ENCODE measurements at regions of chr3 and their contacts with region 1.

Region 1: DNA sequence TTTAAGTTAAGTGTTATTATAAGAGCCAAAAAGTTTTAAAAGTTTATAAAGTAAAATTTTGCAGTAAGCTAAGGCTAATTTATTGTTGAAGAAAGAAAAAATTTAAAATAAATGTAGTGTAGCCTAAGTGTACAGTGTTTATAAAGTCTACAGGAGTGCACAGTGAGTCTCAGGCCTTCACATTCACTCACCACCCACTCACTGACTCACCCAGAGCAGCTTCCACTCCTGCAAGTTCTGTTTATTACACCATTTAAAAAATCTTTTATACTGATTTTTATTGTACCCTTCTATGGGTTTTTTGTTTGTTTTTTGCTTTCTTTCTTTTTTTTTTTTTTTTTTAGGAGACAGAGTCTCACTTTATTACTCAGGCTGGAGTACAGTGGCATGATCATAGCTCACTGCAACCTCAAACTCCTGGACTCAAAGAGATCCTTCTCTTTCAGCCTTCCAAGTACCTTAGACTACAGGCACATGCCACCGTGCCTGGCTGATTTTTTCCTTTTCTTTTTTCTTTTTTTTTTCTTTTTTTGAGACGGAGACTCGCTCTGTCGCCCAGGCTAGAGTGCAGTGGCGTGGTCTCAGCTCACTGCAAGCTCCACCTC is 25.9 kb downstream of the CSTA start:
- DNase-seq: no peak
- H3K4me3 Mint-ChIP-seq: no peak overlapping the region
- H3K27ac Mint-ChIP-seq: no peak overlapping the region
- H3K4me1 Mint-ChIP-seq: peaks cover 5% of the 10 kb centered on the region
- H3K27me3 Mint-ChIP-seq: no peaks in the 10 kb centered on the region

Region 2: DNA sequence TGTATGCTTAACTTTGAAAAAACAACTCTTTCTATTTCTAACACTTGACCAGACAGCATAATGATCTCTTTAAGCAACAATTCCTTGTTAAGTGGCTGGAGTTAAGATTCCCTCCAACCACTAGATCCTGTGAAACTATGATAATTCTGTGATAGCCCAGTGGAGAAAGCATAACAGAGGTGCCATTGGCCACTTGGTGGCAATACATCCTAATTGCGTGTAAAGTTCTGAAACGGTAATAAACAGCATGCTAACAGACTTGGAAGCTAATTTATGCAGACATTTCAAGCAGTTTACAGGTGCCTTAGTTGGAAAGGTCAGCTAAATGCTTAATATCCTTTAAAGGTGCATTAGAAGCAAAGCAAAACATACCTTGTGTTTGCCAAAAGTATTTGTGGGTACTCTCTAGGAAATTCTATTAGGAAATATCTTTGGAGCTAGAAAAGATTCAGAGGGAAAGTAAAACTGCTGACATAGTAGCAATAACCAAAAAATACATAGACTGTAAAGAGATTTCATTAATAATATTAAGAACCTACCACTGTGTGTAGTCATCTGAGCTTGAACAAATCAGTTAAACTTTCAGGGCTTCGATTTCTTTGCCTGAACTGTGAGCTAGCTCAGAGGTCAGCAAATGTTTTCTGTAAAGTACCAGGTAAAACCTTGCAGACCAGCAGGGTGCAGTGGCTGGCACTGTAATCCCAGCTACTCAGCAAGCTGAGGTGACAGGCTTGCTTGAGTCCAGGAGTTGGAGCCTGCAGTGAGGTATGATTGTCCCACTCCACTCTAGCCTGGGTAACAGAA is 44.9 kb before region 1 on chr3:
- intact Hi-C with region 1: loop called (anchors 5 kb)
- DNase-seq: no peak
- H3K4me3 Mint-ChIP-seq: no peak overlapping the region
- H3K27ac Mint-ChIP-seq: no peak overlapping the region
- H3K4me1 Mint-ChIP-seq: peaks cover 3% of the 10 kb centered on the region
- H3K27me3 Mint-ChIP-seq: peaks cover 6% of the 10 kb centered on the region

Region 3: DNA sequence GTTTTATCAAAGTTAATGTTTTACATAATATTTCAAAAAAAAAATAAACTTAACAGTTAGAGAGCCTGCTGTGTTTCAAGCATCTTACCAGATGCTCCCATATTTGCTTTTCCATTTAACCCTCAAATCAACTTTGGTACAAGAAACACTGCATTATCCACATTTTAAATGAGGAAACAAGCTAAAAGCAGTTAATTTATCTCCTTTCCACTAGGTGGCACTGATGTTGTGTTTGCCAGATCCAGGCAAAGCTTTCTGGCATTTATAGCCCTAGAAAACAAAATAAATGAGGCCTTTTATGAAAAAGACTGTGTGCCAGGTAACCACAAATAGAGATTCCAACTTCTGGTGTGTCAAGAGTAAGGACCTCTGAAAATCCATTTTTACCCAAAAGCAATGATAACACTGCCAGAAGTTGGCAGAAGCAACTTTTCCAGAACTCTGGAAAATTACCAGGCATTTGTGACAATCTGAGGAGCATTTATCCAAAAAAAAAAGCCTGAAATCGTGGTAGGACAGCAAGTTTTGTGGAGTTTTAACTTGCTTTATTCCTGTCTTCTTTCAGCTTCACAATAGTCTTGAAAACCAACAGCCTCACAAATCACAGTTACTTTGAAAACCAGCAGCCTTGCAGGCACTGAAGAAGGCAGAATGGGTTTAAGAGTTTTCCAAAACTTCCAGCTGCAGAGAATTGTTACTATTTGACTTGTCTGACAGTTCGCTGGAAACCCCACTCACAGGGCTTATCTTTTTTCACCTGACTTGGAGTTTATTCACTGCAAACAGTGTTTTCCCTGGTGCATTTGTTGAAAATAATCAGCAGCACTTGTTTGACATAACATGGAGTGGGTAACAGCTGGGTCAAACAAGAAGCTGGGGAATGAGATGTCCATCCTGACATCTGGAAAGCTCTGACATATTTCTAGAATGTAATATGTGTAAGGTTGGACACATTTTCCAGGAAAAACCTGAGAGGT is 42.2 kb after region 1 on chr3:
- intact Hi-C with region 1: no loop called
- DNase-seq: no peak
- H3K4me3 Mint-ChIP-seq: no peak overlapping the region
- H3K27ac Mint-ChIP-seq: no peak overlapping the region
- H3K4me1 Mint-ChIP-seq: peaks cover 46% of the 10 kb centered on the region
- H3K27me3 Mint-ChIP-seq: no peaks in the 10 kb centered on the region

Region 4: DNA sequence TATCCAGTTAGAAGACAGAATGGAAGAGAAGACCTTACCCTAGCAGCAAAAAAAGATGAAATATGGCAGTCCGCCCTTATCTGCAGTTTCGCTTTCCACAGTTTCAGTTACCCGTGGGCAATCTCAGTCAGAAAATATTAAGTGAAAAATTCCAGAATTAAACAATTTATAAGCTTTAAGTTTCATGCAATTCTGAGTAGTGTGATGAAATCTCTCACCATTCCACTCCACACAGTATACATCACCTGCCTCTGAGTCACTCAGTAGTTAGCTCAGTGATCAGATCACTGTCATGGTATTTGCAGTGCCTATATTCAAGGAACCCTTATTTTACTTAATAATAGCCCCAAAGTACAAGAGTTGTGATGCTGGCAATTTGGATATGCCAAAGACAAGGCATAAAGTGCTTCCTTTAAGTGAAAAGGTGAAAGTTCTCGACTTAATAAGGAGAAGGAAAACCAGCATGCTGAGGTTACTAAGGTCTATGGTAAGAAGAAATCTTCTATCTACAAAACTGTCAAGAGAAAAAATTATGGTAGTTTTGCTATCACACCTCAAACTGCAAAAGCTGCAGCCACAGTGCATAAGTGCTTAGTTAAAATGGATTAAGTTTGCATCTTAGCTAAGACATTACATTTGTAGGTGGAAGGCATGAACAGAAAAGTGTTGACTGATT is 394.6 kb after region 1 on chr3:
- intact Hi-C with region 1: no loop called
- DNase-seq: no peak
- H3K4me3 Mint-ChIP-seq: no peak overlapping the region
- H3K27ac Mint-ChIP-seq: no peak overlapping the region
- H3K4me1 Mint-ChIP-seq: no peaks in the 10 kb centered on the region
- H3K27me3 Mint-ChIP-seq: no peaks in the 10 kb centered on the region

Region 5: GRCh38 chr3:122835590-122835989 is 484.7 kb after region 1 on chr3:
- intact Hi-C with region 1: no loop called
- DNase-seq: no peak
- H3K4me3 Mint-ChIP-seq: no peak overlapping the region
- H3K27ac Mint-ChIP-seq: no peak overlapping the region
- H3K4me1 Mint-ChIP-seq: no peaks in the 10 kb centered on the region
- H3K27me3 Mint-ChIP-seq: no peaks in the 10 kb centered on the region

Measured in activated T-helper 1 cell treated with anti-CD3 and anti-CD28 coated beads, Interleukin-12 subunit alpha, Interleukin-12 subunit beta, Interleukin-2, Interleukin-4 antibody, amounts not matched to agents 30 ng/mL and 10 ng/mL and 1 ng/mL, durations not matched to agents 14 hours and 24 hours and 36 hours (primary cell).